Activated B cell treated with CpG ODN at 0.5 μM for 24 hours (primary cell): ENCODE measurements at regions of chr2 and their contacts with region 1.

Region 1: GRCh38 chr2:121649596-121650314 is 493 bp upstream of the CLASP1 start:
- DNase-seq: peak; percentile 87
- ATAC-seq: peak; percentile 93
- H3K4me3 Mint-ChIP-seq: peak overlapping the region; percentile 100
- H3K27ac Mint-ChIP-seq: peak overlapping the region; percentile 100
- H3K4me1 Mint-ChIP-seq: peaks cover 51% of the 10 kb centered on the region
- H3K27me3 Mint-ChIP-seq: no peaks in the 10 kb centered on the region
- CTCF ChIP-seq: no peak

Region 2: GRCh38 chr2:121561617-121562268 is 88.0 kb before region 1 on chr2:
- CTCF ChIA-PET with region 1: no interaction called
- POLR2A ChIA-PET with region 1: interaction called, 10 read pairs
- intact Hi-C with region 1: no loop called
- DNase-seq: no peak
- ATAC-seq: no peak
- H3K4me3 Mint-ChIP-seq: no peak overlapping the region
- H3K27ac Mint-ChIP-seq: no peak overlapping the region
- H3K4me1 Mint-ChIP-seq: peaks cover 15% of the 10 kb centered on the region
- H3K27me3 Mint-ChIP-seq: no peaks in the 10 kb centered on the region
- CTCF ChIP-seq: no peak

Region 3: GRCh38 chr2:121605820-121606733 is 43.7 kb before region 1 on chr2:
- CTCF ChIA-PET with region 1: no interaction called
- POLR2A ChIA-PET with region 1: interaction called, 12 read pairs
- intact Hi-C with region 1: no loop called
- DNase-seq: no peak
- ATAC-seq: no peak
- H3K4me3 Mint-ChIP-seq: no peak overlapping the region
- H3K27ac Mint-ChIP-seq: no peak overlapping the region
- H3K4me1 Mint-ChIP-seq: peaks cover 30% of the 10 kb centered on the region
- H3K27me3 Mint-ChIP-seq: no peaks in the 10 kb centered on the region
- CTCF ChIP-seq: no peak

Region 4: GRCh38 chr2:121699421-121700333 is 49.9 kb after region 1 on chr2:
- CTCF ChIA-PET with region 1: no interaction called
- POLR2A ChIA-PET with region 1: interaction called, 15 read pairs
- intact Hi-C with region 1: loop called (anchors 2 kb)
- DNase-seq: peak; percentile 18
- ATAC-seq: peak; percentile 99
- H3K4me3 Mint-ChIP-seq: peak overlapping the region; percentile 57
- H3K27ac Mint-ChIP-seq: no peak overlapping the region
- H3K4me1 Mint-ChIP-seq: peaks cover 12% of the 10 kb centered on the region
- H3K27me3 Mint-ChIP-seq: no peaks in the 10 kb centered on the region
- CTCF ChIP-seq: no peak

Region 5: GRCh38 chr2:121736462-121737341 is 86.9 kb after region 1 on chr2 and contains the start of gene NIFK:
- CTCF ChIA-PET with region 1: no interaction called
- POLR2A ChIA-PET with region 1: interaction called, 55 read pairs
- intact Hi-C with region 1: loop called (anchors 1 kb)
- DNase-seq: peak; percentile 99
- ATAC-seq: peak; percentile 93
- H3K4me3 Mint-ChIP-seq: peak within 1 kb of the TSS; percentile 97
- H3K27ac Mint-ChIP-seq: peak within 1 kb of the TSS; percentile 97
- H3K4me1 Mint-ChIP-seq: peaks cover 20% of the 10 kb centered on the region
- H3K27me3 Mint-ChIP-seq: no peaks in the 10 kb centered on the region
- CTCF ChIP-seq: no peak
- total RNA-seq, gene NIFK: 86.4 and 102 TPM in 2 replicates